ENCODE measurements at regions of chr5 and their contacts with region 1.

Region 1: GRCh38 chr5:150458819-150459557 is 9.4 kb upstream of the RPS14 start:
- DNase-seq: no peak
- ATAC-seq: peak; percentile 92
- H3K4me3 ChIP-seq: no peak overlapping the region
- H3K27ac ChIP-seq: no peak overlapping the region; the same call in 1 of the 2 replicates
- H3K4me1 ChIP-seq: peaks cover 20 to 26% of the 10 kb centered on the region in 2 experiments
- H3K27me3 ChIP-seq: no peaks in the 10 kb centered on the region
- CTCF ChIP-seq: peak in 2 of 3 experiments; percentile 68 to 77; a peak in 4 of 6 replicates
- POLR2A ChIP-seq: no peak
- RAD21 ChIP-seq: no peak

Region 2: GRCh38 chr5:150523472-150524350 is 64.7 kb after region 1 on chr5:
- CTCF ChIA-PET with region 1: interaction called, 6 read pairs
- POLR2A ChIA-PET with region 1: no interaction called
- RAD21 ChIA-PET with region 1: no interaction called
- intact Hi-C with region 1: loop called (anchors 1 kb)
- DNase-seq: peak; percentile 50
- ATAC-seq: peak; percentile 90
- H3K4me3 ChIP-seq: no peak overlapping the region
- H3K27ac ChIP-seq: no peak overlapping the region
- H3K4me1 ChIP-seq: peaks cover 0 to 16% of the 10 kb centered on the region in 2 experiments; a peak in 2 of 4 replicates
- H3K27me3 ChIP-seq: no peaks in the 10 kb centered on the region
- CTCF ChIP-seq: peak; percentile 66 to 75 (median 69); a peak in 5 of 6 replicates
- POLR2A ChIP-seq: no peak
- RAD21 ChIP-seq: peak; percentile 73

Region 3: DNA sequence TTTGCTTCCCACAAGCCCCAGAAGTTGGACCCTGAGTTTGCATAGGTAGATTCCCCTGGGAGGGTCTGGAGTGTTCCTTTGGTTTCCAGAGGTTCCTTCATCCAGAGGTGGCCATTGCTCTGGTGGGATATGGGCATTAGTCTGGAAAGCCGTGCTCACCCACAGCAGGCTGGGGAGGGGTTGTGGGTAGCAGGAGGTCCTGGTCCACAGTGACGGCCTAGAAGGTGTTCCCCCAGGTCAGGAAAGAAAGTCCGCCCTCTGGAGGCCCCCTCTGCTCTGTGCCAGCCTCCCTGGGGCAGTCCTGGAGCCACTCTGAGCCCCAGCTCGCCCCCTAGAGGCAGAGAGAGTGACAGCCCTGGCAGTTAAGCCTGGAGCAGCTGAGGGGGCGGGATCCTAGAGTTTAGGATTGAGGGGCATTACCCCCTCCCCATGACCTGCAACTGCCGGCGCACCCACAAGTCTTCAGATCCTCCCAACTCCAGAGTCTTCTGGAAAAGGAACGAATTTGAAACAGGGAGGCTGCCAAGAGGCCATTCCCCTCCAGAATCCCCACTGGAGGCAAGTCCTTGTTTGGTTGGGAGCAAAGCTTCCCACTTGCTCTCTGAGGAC is 85.7 kb after region 1 on chr5:
- CTCF ChIA-PET with region 1: interaction called, 11 read pairs
- POLR2A ChIA-PET with region 1: interaction called, 4 read pairs
- RAD21 ChIA-PET with region 1: interaction called, 4 to 7 read pairs
- intact Hi-C with region 1: loop called (anchors 1 kb)
- DNase-seq: peak; percentile 57
- ATAC-seq: peak; percentile 100
- H3K4me3 ChIP-seq: no peak overlapping the region
- H3K27ac ChIP-seq: no peak overlapping the region
- H3K4me1 ChIP-seq: peaks cover 0 to 4% of the 10 kb centered on the region in 2 experiments; a peak in 1 of 4 replicates
- H3K27me3 ChIP-seq: no peaks in the 10 kb centered on the region
- CTCF ChIP-seq: peak; percentile 97 to 99 (median 99)
- POLR2A ChIP-seq: no peak
- RAD21 ChIP-seq: peak; percentile 91

Region 4: GRCh38 chr5:150656191-150657132 is 197.5 kb after region 1 on chr5:
- CTCF ChIA-PET with region 1: no interaction called
- POLR2A ChIA-PET with region 1: no interaction called
- RAD21 ChIA-PET with region 1: no interaction called
- intact Hi-C with region 1: loop called (anchors 2 kb)
- DNase-seq: no peak
- ATAC-seq: peak; percentile 75
- H3K4me3 ChIP-seq: peak overlapping the region; percentile 46 to 64
- H3K27ac ChIP-seq: no peak overlapping the region
- H3K4me1 ChIP-seq: peaks cover 4 to 15% of the 10 kb centered on the region in 2 experiments; a peak in 3 of 4 replicates
- H3K27me3 ChIP-seq: no peaks in the 10 kb centered on the region
- CTCF ChIP-seq: peak; percentile 37 to 59 (median 55); a peak in 5 of 6 replicates
- POLR2A ChIP-seq: no peak
- RAD21 ChIP-seq: peak; percentile 79

Region 5: DNA sequence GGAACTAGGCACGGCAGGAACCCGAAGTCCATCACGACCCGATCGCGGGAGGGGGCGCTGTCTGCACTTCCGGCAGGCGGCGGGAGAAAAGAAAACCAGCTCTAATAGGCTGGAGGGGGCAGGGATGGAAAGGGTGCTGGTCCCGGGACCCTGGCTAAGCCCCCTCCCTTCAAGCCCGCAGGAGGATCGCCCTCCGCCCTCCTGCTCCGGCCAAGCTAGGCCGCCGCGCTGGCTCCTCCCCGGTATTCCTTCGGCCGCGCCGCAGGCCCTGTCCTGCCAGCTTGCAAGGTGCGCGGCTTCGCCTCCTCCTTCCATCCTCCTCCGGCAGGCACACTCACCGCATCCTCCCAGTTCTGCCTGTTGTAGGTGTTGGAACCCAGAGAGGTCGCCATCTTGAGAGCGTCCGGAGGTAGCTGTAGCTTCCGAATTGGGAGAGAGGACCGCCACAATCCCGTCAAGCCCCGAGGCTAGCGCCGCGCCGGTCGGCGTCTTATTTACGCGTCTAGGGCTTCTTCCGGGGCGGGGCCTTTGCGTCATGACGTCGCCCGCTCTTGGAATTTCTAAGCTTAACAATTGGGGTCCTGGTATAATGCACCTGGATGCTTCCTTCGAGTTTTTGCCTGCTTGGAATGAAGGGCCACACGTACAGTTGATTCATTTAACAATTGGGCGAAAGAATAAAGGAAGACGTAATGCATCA is 241.8 kb after region 1 on chr5 and contains the start of gene RBM22:
- CTCF ChIA-PET with region 1: no interaction called
- POLR2A ChIA-PET with region 1: interaction called, 3 read pairs
- RAD21 ChIA-PET with region 1: no interaction called
- intact Hi-C with region 1: loop called (anchors 5 kb)
- DNase-seq: peak; percentile 79
- ATAC-seq: peak; percentile 95
- H3K4me3 ChIP-seq: peak within 1 kb of the TSS; percentile 86 to 87
- H3K27ac ChIP-seq: peak within 1 kb of the TSS; percentile 76
- H3K4me1 ChIP-seq: peaks cover 2 to 15% of the 10 kb centered on the region in 2 experiments; a peak in 3 of 4 replicates
- H3K27me3 ChIP-seq: no peaks in the 10 kb centered on the region
- CTCF ChIP-seq: peak; percentile 32 to 69 (median 55); a peak in 5 of 6 replicates
- POLR2A ChIP-seq: peak; percentile 87
- RAD21 ChIP-seq: peak; percentile 22; the same call in 1 of the 2 replicates
- total RNA-seq, gene RBM22: 61.4 TPM

Region 6: GRCh38 chr5:151264113-151264512 is 805.1 kb after region 1 on chr5:
- CTCF ChIA-PET with region 1: no interaction called
- POLR2A ChIA-PET with region 1: no interaction called
- RAD21 ChIA-PET with region 1: no interaction called
- intact Hi-C with region 1: no loop called
- DNase-seq: no peak
- ATAC-seq: peak; percentile 87
- H3K4me3 ChIP-seq: no peak overlapping the region
- H3K27ac ChIP-seq: no peak overlapping the region
- H3K4me1 ChIP-seq: peaks cover 7 to 16% of the 10 kb centered on the region in 2 experiments; a peak in 3 of 4 replicates
- H3K27me3 ChIP-seq: no peaks in the 10 kb centered on the region
- CTCF ChIP-seq: 0 out of 6 replicates have a peak, but pooled peaks of 1 of the 3 experiments have one; percentile 8
- POLR2A ChIP-seq: no peak
- RAD21 ChIP-seq: no peak

Measured in HCT116 (cell line).